Activated CD8-positive, alpha-beta T cell treated with anti-CD3 and anti-CD28 coated beads for 36 hours (primary cell): ENCODE measurements at regions of chr15 and their contacts with region 1.

Region 1: GRCh38 chr15:38563723-38564519 is 693 bp downstream of the RASGRP1 start:
- DNase-seq: peak; percentile 89
- ATAC-seq: peak; percentile 63
- H3K4me3 Mint-ChIP-seq: peak overlapping the region; percentile 83
- H3K27ac Mint-ChIP-seq: peak overlapping the region; percentile 96
- H3K4me1 Mint-ChIP-seq: peaks cover 52% of the 10 kb centered on the region
- H3K27me3 Mint-ChIP-seq: no peaks in the 10 kb centered on the region
- CTCF ChIP-seq: peak; percentile 96

Region 2: DNA sequence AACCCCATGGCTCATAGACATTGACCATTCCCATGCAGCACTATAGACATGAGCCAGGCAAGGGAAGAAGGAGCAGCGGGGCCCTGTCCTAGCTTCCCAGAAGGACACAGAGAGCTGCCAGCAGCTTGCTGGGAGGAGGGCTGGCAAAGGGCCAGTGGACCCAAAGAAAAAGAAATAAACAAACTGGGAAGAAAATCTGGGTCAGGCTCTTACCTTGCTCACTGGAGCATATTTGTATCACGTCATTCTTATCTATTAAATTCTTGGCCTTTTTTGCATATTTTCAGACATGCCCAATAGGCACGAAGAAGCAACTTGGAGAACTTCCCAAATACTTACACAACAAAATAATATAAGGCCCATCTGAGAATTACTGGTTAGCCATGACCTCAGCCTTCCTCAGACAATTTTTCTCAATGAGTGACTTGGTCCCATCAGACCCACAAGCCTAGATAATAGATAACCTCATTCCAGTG is 27.7 kb before region 1 on chr15:
- CTCF ChIA-PET with region 1: interaction called, 19 read pairs
- POLR2A ChIA-PET with region 1: interaction called, 13 read pairs
- intact Hi-C with region 1: no loop called
- DNase-seq: no peak
- ATAC-seq: no peak
- H3K4me3 Mint-ChIP-seq: no peak overlapping the region
- H3K27ac Mint-ChIP-seq: peak overlapping the region; percentile 97
- H3K4me1 Mint-ChIP-seq: peaks cover 98% of the 10 kb centered on the region
- H3K27me3 Mint-ChIP-seq: no peaks in the 10 kb centered on the region
- CTCF ChIP-seq: no peak

Region 3: DNA sequence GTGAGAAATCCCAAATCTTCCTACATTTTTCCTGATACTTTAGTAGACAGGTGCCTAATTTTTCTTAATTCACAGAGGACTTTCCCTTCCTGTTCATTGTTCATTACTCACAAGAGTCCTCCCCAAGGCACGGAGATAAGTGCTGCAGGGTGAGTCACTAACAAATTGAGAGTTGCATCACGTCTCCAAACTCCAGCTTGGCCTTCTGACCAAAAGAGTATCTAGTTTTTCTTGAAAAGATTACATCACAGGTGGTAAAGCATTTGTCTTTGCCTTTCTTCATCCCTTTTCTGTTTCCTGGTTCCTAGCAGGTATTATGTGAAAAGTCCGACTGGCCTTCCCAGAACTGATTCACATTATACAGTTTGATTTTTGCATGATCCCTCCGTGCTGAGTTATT is 25.6 kb after region 1 on chr15:
- CTCF ChIA-PET with region 1: interaction called, 20 read pairs
- POLR2A ChIA-PET with region 1: interaction called, 8 read pairs
- intact Hi-C with region 1: no loop called
- DNase-seq: peak; percentile 51
- ATAC-seq: peak; percentile 79
- H3K4me3 Mint-ChIP-seq: no peak overlapping the region
- H3K27ac Mint-ChIP-seq: peak overlapping the region; percentile 12
- H3K4me1 Mint-ChIP-seq: peaks cover 28% of the 10 kb centered on the region
- H3K27me3 Mint-ChIP-seq: no peaks in the 10 kb centered on the region
- CTCF ChIP-seq: no peak

Region 4: DNA sequence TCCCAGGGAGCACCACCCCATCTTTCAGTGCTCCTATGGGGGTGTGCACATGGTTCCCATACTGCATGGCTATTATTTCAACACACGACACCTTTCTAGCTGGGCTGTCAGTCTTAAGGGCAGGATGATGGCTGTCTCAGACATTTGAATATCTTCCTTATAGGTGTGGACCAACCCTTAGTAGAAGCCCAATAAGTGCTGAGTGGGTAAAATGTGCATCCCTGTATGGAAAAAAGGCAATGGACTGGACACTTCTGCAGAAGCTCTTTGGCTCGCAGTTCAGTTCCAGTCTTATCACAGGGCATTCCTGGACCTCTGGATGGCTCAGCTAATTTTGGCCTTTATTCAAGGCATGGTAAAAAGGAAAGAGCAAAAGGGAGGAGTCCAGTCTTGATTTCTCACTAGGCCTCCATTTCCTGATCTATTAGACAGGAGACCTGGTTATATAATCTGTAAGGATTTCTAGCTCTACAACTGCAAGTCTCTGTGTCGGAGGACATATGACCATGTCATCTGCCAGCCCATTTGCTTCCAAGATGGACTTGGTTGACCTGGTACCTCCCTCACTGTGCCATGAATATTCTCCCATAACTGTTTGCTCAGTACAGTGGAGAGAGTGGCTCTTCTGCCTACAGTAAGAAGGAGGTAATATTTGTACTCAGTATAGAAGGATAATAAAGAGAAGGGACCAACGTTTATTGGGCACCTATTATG is 54.5 kb after region 1 on chr15:
- CTCF ChIA-PET with region 1: interaction called, 71 read pairs
- POLR2A ChIA-PET with region 1: interaction called, 90 read pairs
- intact Hi-C with region 1: no loop called
- DNase-seq: no peak
- ATAC-seq: no peak
- H3K4me3 Mint-ChIP-seq: no peak overlapping the region
- H3K27ac Mint-ChIP-seq: no peak overlapping the region
- H3K4me1 Mint-ChIP-seq: peaks cover 21% of the 10 kb centered on the region
- H3K27me3 Mint-ChIP-seq: no peaks in the 10 kb centered on the region
- CTCF ChIP-seq: no peak

Region 5: GRCh38 chr15:38631126-38632075 is 67.5 kb after region 1 on chr15:
- CTCF ChIA-PET with region 1: interaction called, 32 read pairs
- POLR2A ChIA-PET with region 1: interaction called, 7 read pairs
- intact Hi-C with region 1: no loop called
- DNase-seq: peak; percentile 54
- ATAC-seq: peak; percentile 68
- H3K4me3 Mint-ChIP-seq: peak overlapping the region; percentile 33
- H3K27ac Mint-ChIP-seq: peak overlapping the region; percentile 93
- H3K4me1 Mint-ChIP-seq: peaks cover 56% of the 10 kb centered on the region
- H3K27me3 Mint-ChIP-seq: no peaks in the 10 kb centered on the region
- CTCF ChIP-seq: no peak

Region 6: GRCh38 chr15:38660738-38661137 is 96.8 kb after region 1 on chr15:
- CTCF ChIA-PET with region 1: interaction called, 90 read pairs
- POLR2A ChIA-PET with region 1: interaction called, 10 read pairs
- intact Hi-C with region 1: no loop called
- DNase-seq: peak; percentile 61
- ATAC-seq: peak; percentile 88
- H3K4me3 Mint-ChIP-seq: peak overlapping the region; percentile 33
- H3K27ac Mint-ChIP-seq: peak overlapping the region; percentile 73
- H3K4me1 Mint-ChIP-seq: peaks cover 64% of the 10 kb centered on the region
- H3K27me3 Mint-ChIP-seq: no peaks in the 10 kb centered on the region
- CTCF ChIP-seq: no peak

Region 7: GRCh38 chr15:38699633-38700230 is 135.8 kb after region 1 on chr15:
- CTCF ChIA-PET with region 1: interaction called, 104 read pairs
- POLR2A ChIA-PET with region 1: interaction called, 13 read pairs
- intact Hi-C with region 1: no loop called
- DNase-seq: peak; percentile 89
- ATAC-seq: peak; percentile 56
- H3K4me3 Mint-ChIP-seq: no peak overlapping the region
- H3K27ac Mint-ChIP-seq: peak overlapping the region; percentile 59
- H3K4me1 Mint-ChIP-seq: peaks cover 58% of the 10 kb centered on the region
- H3K27me3 Mint-ChIP-seq: no peaks in the 10 kb centered on the region
- CTCF ChIP-seq: peak; percentile 89

Region 8: GRCh38 chr15:38879909-38880471 is 316.1 kb after region 1 on chr15:
- CTCF ChIA-PET with region 1: no interaction called
- POLR2A ChIA-PET with region 1: no interaction called
- intact Hi-C with region 1: no loop called
- DNase-seq: no peak
- ATAC-seq: no peak
- H3K4me3 Mint-ChIP-seq: no peak overlapping the region
- H3K27ac Mint-ChIP-seq: no peak overlapping the region
- H3K4me1 Mint-ChIP-seq: peaks cover 2% of the 10 kb centered on the region
- H3K27me3 Mint-ChIP-seq: peaks cover 4% of the 10 kb centered on the region
- CTCF ChIP-seq: no peak